ENCODE measurements at regions of chr4 and their contacts with region 1.

Region 1: GRCh38 chr4:87006676-87007527 is 72.1 kb downstream of the AFF1 start:
- DNase-seq: peak; percentile 94
- H3K4me3 ChIP-seq: peak overlapping the region; percentile 84 to 93 (median 93)
- H3K27ac ChIP-seq: peak overlapping the region; percentile 92
- H3K4me1 ChIP-seq: peaks cover 39% of the 10 kb centered on the region
- H3K27me3 ChIP-seq: no peaks in the 10 kb centered on the region
- CTCF ChIP-seq: peak; percentile 12 to 13
- POLR2A ChIP-seq: peak; percentile 99

Region 2: GRCh38 chr4:86870442-86871069 is 136.3 kb before region 1 on chr4:
- CTCF ChIA-PET with region 1: no interaction called
- POLR2A ChIA-PET with region 1: no interaction called
- dilution Hi-C with region 1: no loop called
- intact Hi-C with region 1: no loop called
- DNase-seq: no peak
- H3K4me3 ChIP-seq: no peak overlapping the region
- H3K27ac ChIP-seq: no peak overlapping the region
- H3K4me1 ChIP-seq: no peaks in the 10 kb centered on the region
- H3K27me3 ChIP-seq: no peaks in the 10 kb centered on the region
- CTCF ChIP-seq: no peak
- POLR2A ChIP-seq: no peak

Region 3: DNA sequence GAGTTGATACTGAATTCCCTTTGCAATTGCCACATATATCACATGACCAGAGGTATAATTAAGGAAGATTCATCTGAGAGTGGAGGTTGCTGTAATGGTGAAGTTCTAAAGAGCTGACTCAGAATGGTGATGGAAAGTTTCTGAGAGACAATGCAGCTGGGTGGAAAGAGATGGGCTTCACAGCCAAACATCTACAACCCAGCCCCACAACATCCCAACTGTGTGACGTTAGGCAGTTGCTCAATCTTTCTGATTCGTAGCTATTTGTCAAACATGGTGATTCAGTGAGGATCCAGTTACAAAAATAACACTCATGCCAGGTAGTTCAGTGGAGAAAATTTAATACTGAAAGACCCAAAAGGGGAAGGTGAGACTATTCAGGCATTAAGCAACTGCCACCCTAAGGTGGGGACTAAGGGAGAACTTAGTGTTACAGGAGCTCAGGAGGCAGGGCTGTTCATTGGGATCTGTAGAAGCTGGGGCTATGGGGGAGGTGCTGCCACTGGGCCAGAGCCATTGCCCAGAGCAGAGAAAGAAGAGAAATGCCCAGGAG is 79.0 kb before region 1 on chr4:
- CTCF ChIA-PET with region 1: interaction called, 62 read pairs
- POLR2A ChIA-PET with region 1: interaction called, 11 read pairs
- dilution Hi-C with region 1: no loop called
- intact Hi-C with region 1: no loop called
- DNase-seq: peak; percentile 43
- H3K4me3 ChIP-seq: no peak overlapping the region
- H3K27ac ChIP-seq: no peak overlapping the region
- H3K4me1 ChIP-seq: peaks cover 29% of the 10 kb centered on the region
- H3K27me3 ChIP-seq: no peaks in the 10 kb centered on the region
- CTCF ChIP-seq: no peak
- POLR2A ChIP-seq: no peak

Region 4: GRCh38 chr4:86977621-86978184 is 29.2 kb before region 1 on chr4:
- CTCF ChIA-PET with region 1: interaction called, 6 read pairs
- POLR2A ChIA-PET with region 1: interaction called, 17 read pairs
- dilution Hi-C with region 1: no loop called
- intact Hi-C with region 1: loop called (anchors 1 kb)
- DNase-seq: peak; percentile 94
- H3K4me3 ChIP-seq: no peak overlapping the region
- H3K27ac ChIP-seq: peak overlapping the region; percentile 64
- H3K4me1 ChIP-seq: peaks cover 36% of the 10 kb centered on the region
- H3K27me3 ChIP-seq: no peaks in the 10 kb centered on the region
- CTCF ChIP-seq: no peak
- POLR2A ChIP-seq: no peak

Region 5: GRCh38 chr4:87044511-87045233 is 37.8 kb after region 1 on chr4:
- CTCF ChIA-PET with region 1: no interaction called
- POLR2A ChIA-PET with region 1: interaction called, 4 read pairs
- dilution Hi-C with region 1: no loop called
- intact Hi-C with region 1: loop called (anchors 1 kb)
- DNase-seq: peak; percentile 83
- H3K4me3 ChIP-seq: peak overlapping the region in 1 of 3 experiments; percentile 63
- H3K27ac ChIP-seq: peak overlapping the region; percentile 66
- H3K4me1 ChIP-seq: peaks cover 35% of the 10 kb centered on the region
- H3K27me3 ChIP-seq: no peaks in the 10 kb centered on the region
- CTCF ChIP-seq: no peak
- POLR2A ChIP-seq: no peak

Region 6: GRCh38 chr4:87093443-87094123 is 86.7 kb after region 1 on chr4:
- CTCF ChIA-PET with region 1: interaction called, 18 read pairs
- POLR2A ChIA-PET with region 1: interaction called, 10 read pairs
- dilution Hi-C with region 1: no loop called
- intact Hi-C with region 1: loop called (anchors 1 kb)
- DNase-seq: peak; percentile 70
- H3K4me3 ChIP-seq: no peak overlapping the region
- H3K27ac ChIP-seq: peak overlapping the region; percentile 68
- H3K4me1 ChIP-seq: peaks cover 33% of the 10 kb centered on the region
- H3K27me3 ChIP-seq: no peaks in the 10 kb centered on the region
- CTCF ChIP-seq: peak; percentile 35 to 58
- POLR2A ChIP-seq: no peak

Measured in endothelial cell of umbilical vein (primary cell).